Left ventricle myocardium inferior (tissue), 1 donor: ENCODE measurements at regions of chr17 and their contacts with region 1.

Region 1: DNA sequence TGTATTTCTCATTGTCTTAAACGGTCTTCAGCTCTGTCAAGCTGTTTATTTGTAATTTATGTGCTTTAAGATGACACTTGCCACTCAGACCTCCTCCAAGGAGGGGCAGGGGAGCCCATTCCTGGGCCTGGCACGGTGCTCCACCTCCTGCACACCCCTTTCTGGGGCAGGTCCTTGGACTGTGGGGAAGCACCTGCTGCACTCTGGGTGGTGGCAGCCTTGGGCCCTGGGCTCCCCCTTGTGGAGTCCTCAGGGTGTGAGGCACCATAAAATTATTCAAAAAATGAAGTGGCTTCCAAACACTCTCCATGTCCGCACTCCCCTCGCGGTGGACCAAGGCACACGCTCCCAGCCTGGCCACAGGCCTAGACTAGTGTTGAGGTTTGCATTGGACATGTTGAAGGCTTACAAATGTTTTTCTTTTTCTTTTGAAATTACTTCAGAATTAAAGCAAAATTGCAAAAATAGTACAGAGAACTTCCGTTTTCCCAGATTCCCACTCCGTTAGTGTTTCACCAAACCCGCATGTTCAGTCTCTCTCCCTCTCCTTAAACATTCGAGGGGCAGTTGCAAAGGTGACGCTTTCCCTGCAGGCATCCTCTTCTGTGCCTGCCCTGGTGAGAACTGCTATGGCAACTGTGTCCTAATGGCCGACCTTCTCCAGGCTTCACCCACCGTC is 32.4 kb downstream of the FOXK2 start:
- DNase-seq: peak; percentile 69
- H3K4me3 ChIP-seq: no peak overlapping the region
- H3K27ac ChIP-seq: peak overlapping the region; percentile 75
- H3K4me1 ChIP-seq: peaks cover 76% of the 10 kb centered on the region
- H3K27me3 ChIP-seq: no peaks in the 10 kb centered on the region
- CTCF ChIP-seq: peak; percentile 81

Region 2: GRCh38 chr17:82494236-82495055 is 57.5 kb before region 1 on chr17:
- intact Hi-C with region 1: loop called (anchors 10 kb)
- DNase-seq: peak; percentile 81
- H3K4me3 ChIP-seq: peak overlapping the region; percentile 17
- H3K27ac ChIP-seq: peak overlapping the region; percentile 67
- H3K4me1 ChIP-seq: peaks cover 32% of the 10 kb centered on the region
- H3K27me3 ChIP-seq: no peaks in the 10 kb centered on the region
- CTCF ChIP-seq: peak; percentile 90

Region 3: DNA sequence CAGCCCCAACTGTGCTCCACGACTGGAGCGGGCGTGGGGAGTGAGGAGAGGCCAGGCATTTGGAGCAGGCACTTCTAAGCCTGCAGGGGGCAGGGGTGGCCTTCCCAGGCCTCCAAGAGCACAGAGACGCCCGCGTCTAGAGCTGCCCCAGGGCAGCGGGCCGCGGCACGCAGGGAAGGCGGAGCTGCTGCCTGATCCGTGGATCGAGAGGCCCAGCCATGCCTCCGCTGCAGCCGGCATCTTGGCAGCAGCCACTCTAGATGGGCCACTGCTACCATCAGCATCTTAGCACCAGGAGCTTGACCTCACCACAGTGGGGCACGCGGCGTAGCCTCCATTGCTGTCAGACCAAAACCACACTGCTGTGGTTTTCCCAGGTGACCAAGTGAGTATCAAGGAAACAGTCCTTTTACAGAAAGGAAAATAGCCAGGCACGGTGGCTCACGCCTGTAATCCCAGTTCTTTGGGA is 116.7 kb after region 1 on chr17:
- intact Hi-C with region 1: no loop called
- DNase-seq: peak; percentile 59
- H3K4me3 ChIP-seq: peak overlapping the region; percentile 43
- H3K27ac ChIP-seq: peak overlapping the region; percentile 80
- H3K4me1 ChIP-seq: peaks cover 28% of the 10 kb centered on the region
- H3K27me3 ChIP-seq: no peaks in the 10 kb centered on the region
- CTCF ChIP-seq: peak; percentile 70